Naive thymus-derived CD4-positive, alpha-beta T cell (primary cell): ENCODE measurements at regions of chr11 and their contacts with region 1.

Region 1: GRCh38 chr11:14764579-14765527 is 121.2 kb downstream of the PDE3B start:
- DNase-seq: peak in 7 of 9 donors; percentile 82 to 95 (median 92)
- ATAC-seq: peak; percentile 95
- H3K4me3 ChIP-seq: peak overlapping the region; percentile 30
- H3K4me3 Mint-ChIP-seq: peak overlapping the region in 5 of 10 donors; percentile 54 to 78 (median 62)
- H3K27ac ChIP-seq: peak overlapping the region; percentile 72
- H3K27ac Mint-ChIP-seq: no peak overlapping the region
- H3K4me1 ChIP-seq: peaks cover 36 to 61% of the 10 kb centered on the region in 2 donors
- H3K4me1 Mint-ChIP-seq: peaks cover 15 to 54% (median 34%) of the 10 kb centered on the region in 7 donors
- H3K27me3 ChIP-seq: no peaks in the 10 kb centered on the region
- H3K27me3 Mint-ChIP-seq: no peaks in the 10 kb centered on the region

Region 2: DNA sequence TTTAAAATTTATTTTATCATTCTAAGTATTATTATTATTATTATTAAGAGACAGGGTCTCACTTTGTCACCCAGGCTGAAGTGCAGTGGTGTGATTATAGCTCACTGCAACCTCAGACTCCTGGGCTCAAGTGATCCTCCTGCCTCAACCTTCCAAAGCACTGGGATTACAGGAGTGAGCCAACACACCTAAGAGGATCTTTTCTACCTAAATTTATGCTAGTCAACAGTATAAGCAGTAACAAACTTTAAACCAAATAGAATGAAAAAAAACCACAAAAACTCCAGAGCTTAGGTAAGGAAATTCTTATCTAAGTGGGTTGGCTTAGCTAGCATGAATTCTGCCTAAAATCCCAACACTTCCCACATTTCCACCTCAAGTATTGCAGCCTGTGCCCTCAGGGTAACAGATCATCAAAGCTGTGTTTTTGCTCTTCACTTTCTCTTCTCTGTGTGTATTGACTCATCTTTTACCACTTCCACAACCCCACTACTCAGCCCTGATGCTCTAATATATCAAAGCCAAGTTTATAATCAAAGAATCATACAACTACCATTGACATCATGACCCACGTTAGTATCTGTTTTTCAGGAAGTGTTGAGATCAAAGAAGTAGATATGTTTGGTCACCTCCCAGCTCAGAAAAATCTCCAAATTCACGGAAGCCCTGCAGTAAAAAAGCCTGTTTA is 896.0 kb before region 1 on chr11:
- CTCF ChIA-PET with region 1: no interaction called
- POLR2A ChIA-PET with region 1: no interaction called
- intact Hi-C with region 1: loop called in 1 of 2 experiments (anchors 2 kb)
- DNase-seq: peak in 7 of 9 donors; percentile 73 to 92 (median 88)
- ATAC-seq: peak; percentile 96
- H3K4me3 ChIP-seq: no peak overlapping the region
- H3K4me3 Mint-ChIP-seq: peak overlapping the region in 9 of 10 donors; percentile 2 to 70 (median 40)
- H3K27ac ChIP-seq: peak overlapping the region; percentile 87
- H3K27ac Mint-ChIP-seq: peak overlapping the region; percentile 86 to 97 (median 92)
- H3K4me1 ChIP-seq: peaks cover 9 to 19% of the 10 kb centered on the region in 2 donors
- H3K4me1 Mint-ChIP-seq: peaks cover 19 to 56% (median 43%) of the 10 kb centered on the region in 7 donors
- H3K27me3 ChIP-seq: no peaks in the 10 kb centered on the region
- H3K27me3 Mint-ChIP-seq: peaks cover 0 to 14% (median 0%) of the 10 kb centered on the region in 5 donors

Region 3: DNA sequence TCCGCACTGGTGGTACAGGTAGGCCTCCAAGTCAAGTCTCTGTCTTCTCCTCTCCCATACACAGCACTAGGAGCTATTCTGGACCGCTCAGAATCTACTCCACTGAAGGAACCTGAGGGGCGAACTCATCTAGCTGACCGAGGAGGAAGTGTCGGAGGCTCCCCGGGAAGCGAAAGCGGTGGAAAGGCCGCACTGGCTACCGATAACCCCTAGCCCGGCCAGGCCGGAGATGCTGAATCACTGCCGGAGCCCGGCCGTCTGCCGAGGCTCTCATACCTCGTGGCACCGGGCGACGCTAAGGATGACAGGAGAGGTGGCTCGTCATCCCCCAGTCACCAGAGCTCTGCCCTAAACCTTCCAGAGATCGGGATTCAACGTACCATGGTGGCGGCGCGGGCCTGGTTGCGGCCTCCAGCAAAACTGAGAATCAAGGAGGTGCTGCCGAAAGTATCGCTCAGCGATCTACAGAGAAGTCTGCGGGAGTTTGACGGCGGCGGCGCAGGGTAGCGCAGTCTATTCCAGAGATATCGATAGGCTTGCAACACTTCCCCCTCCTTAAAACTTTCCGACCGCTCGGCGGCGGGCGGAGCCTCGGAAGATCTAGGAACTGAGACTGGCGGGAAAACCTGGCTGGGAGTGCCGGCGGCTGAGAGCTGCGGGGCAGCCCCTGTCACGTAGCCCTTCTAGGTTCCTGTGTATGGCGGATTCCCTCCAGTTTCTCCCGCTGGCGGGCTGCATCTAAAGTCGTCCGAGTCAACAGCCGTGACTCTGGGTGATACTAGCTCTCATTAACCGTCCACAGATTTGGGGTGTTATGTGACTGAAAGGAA is 244.7 kb before region 1 on chr11 and contains the start of gene PSMA1:
- CTCF ChIA-PET with region 1: interaction called, 3 read pairs
- POLR2A ChIA-PET with region 1: interaction called, 8 read pairs
- intact Hi-C with region 1: loop called (anchors 1 kb)
- DNase-seq: peak; percentile 72 to 95 (median 89)
- ATAC-seq: peak; percentile 96
- H3K4me3 ChIP-seq: peak within 1 kb of the TSS; percentile 70
- H3K4me3 Mint-ChIP-seq: peak within 1 kb of the TSS; percentile 86 to 99 (median 97)
- H3K27ac ChIP-seq: peak within 1 kb of the TSS; percentile 96
- H3K27ac Mint-ChIP-seq: peak within 1 kb of the TSS; percentile 93 to 99 (median 96)
- H3K4me1 ChIP-seq: peaks cover 14 to 16% of the 10 kb centered on the region in 2 donors
- H3K4me1 Mint-ChIP-seq: peaks cover 15 to 43% (median 38%) of the 10 kb centered on the region in 7 donors
- H3K27me3 ChIP-seq: no peaks in the 10 kb centered on the region
- H3K27me3 Mint-ChIP-seq: no peaks in the 10 kb centered on the region
- total RNA-seq, gene PSMA1: 103 to 253 (median 120) TPM

Region 4: GRCh38 chr11:14578541-14578956 is 186.3 kb before region 1 on chr11:
- CTCF ChIA-PET with region 1: interaction called, 4 read pairs
- POLR2A ChIA-PET with region 1: interaction called, 12 read pairs
- intact Hi-C with region 1: loop called (anchors 1 kb)
- DNase-seq: peak in 8 of 9 donors; percentile 57 to 95 (median 92)
- ATAC-seq: peak; percentile 99
- H3K4me3 ChIP-seq: peak overlapping the region; percentile 22
- H3K4me3 Mint-ChIP-seq: peak overlapping the region; percentile 40 to 85 (median 62)
- H3K27ac ChIP-seq: peak overlapping the region; percentile 79
- H3K27ac Mint-ChIP-seq: peak overlapping the region; percentile 92 to 96 (median 95)
- H3K4me1 ChIP-seq: peaks cover 39 to 41% of the 10 kb centered on the region in 2 donors
- H3K4me1 Mint-ChIP-seq: peaks cover 46 to 71% (median 63%) of the 10 kb centered on the region in 7 donors
- H3K27me3 ChIP-seq: no peaks in the 10 kb centered on the region
- H3K27me3 Mint-ChIP-seq: no peaks in the 10 kb centered on the region

Region 5: GRCh38 chr11:14722496-14722895 is 42.4 kb before region 1 on chr11:
- CTCF ChIA-PET with region 1: no interaction called
- POLR2A ChIA-PET with region 1: no interaction called
- intact Hi-C with region 1: loop called in 1 of 2 experiments (anchors 5 kb)
- DNase-seq: no peak
- ATAC-seq: no peak
- H3K4me3 ChIP-seq: no peak overlapping the region
- H3K4me3 Mint-ChIP-seq: no peak overlapping the region
- H3K27ac ChIP-seq: no peak overlapping the region
- H3K27ac Mint-ChIP-seq: peak overlapping the region in 2 of 9 donors; percentile 58 to 78
- H3K4me1 ChIP-seq: peaks cover 2 to 10% of the 10 kb centered on the region in 2 donors
- H3K4me1 Mint-ChIP-seq: peaks cover 27 to 47% (median 45%) of the 10 kb centered on the region in 7 donors
- H3K27me3 ChIP-seq: no peaks in the 10 kb centered on the region
- H3K27me3 Mint-ChIP-seq: no peaks in the 10 kb centered on the region

Region 6: GRCh38 chr11:14789879-14790484 is 25.1 kb after region 1 on chr11:
- CTCF ChIA-PET with region 1: interaction called, 6 read pairs
- POLR2A ChIA-PET with region 1: interaction called, 4 read pairs
- intact Hi-C with region 1: loop called in 1 of 2 experiments (anchors 1 kb)
- DNase-seq: peak in 4 of 9 donors; percentile 19 to 37 (median 36)
- ATAC-seq: peak; percentile 42
- H3K4me3 ChIP-seq: no peak overlapping the region
- H3K4me3 Mint-ChIP-seq: no peak overlapping the region
- H3K27ac ChIP-seq: no peak overlapping the region
- H3K27ac Mint-ChIP-seq: peak overlapping the region in 7 of 9 donors; percentile 2 to 74 (median 51)
- H3K4me1 ChIP-seq: no peaks in the 10 kb centered on the region
- H3K4me1 Mint-ChIP-seq: peaks cover 4 to 39% (median 17%) of the 10 kb centered on the region in 7 donors
- H3K27me3 ChIP-seq: no peaks in the 10 kb centered on the region
- H3K27me3 Mint-ChIP-seq: no peaks in the 10 kb centered on the region

Region 7: DNA sequence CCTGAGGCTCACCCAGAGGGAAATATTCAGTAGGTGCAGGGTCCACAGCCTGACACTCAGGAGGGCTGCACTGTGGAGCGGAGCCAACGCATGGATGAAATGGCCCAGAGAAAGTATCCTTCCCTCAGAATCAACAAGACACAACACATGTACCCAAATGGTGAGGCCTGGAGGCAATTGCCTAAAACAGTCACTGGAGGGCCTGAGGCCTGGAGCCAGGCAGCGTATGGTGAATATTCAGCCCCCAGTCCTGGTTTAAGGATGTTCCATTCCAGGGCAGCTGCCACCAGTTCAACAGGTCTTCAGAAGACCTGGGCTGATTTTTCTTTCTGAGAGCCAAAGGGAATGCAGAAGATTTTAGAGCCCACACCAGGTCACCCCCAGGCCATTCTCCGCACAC is 614.6 kb after region 1 on chr11:
- CTCF ChIA-PET with region 1: no interaction called
- POLR2A ChIA-PET with region 1: no interaction called
- intact Hi-C with region 1: no loop called
- DNase-seq: no peak
- ATAC-seq: no peak
- H3K4me3 ChIP-seq: no peak overlapping the region
- H3K4me3 Mint-ChIP-seq: no peak overlapping the region
- H3K27ac ChIP-seq: no peak overlapping the region
- H3K27ac Mint-ChIP-seq: no peak overlapping the region
- H3K4me1 ChIP-seq: no peaks in the 10 kb centered on the region
- H3K4me1 Mint-ChIP-seq: no peaks in the 10 kb centered on the region
- H3K27me3 ChIP-seq: no peaks in the 10 kb centered on the region
- H3K27me3 Mint-ChIP-seq: peaks cover 0 to 21% (median 0%) of the 10 kb centered on the region in 5 donors